ENCODE measurements at regions of chr7 and their contacts with region 1.

Region 1: DNA sequence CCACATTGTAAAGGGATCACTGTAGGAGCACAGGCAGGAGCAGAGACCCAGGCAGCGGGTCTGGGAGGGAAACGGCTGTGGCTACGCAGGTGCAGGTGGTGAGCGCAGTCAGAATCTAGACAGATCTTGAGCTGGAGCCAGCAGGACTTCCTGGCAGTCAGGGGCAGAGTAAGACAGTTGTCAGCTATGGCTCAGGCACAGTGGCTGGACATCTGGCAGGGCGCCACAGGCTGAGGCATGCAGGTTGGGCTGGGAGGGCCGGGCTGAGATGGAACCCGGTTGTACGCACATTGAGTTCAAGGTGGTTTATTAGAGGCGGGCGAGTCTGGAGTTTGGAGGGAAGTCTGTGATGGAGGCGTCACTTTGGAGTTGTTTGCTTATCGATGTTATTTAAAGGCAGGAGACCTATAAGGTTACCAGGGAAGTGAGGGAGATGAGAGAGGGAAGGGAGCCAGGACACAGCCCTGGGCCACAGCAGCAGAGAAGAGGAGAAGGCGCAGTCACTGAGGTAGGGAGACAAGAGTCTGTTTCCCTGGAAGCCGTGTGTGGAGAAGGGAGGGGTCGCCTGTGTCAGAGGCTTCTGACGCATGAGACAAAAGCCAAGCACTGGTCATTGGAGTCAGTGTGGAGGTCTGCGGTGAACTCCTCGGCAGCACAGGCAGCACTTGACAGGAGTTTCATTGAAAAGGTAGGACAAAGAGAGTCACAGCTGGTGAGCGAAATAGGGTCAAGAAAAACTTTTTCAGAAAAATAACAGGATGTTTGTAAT is 73.8 kb downstream of the LANCL2 start:
- DNase-seq: peak in 1 of 2 experiments; percentile 37
- H3K4me3 ChIP-seq: no peak overlapping the region
- H3K27ac ChIP-seq: no peak overlapping the region
- H3K4me1 ChIP-seq: no peaks in the 10 kb centered on the region
- H3K27me3 ChIP-seq: no peaks in the 10 kb centered on the region
- CTCF ChIP-seq: no peak

Region 2: DNA sequence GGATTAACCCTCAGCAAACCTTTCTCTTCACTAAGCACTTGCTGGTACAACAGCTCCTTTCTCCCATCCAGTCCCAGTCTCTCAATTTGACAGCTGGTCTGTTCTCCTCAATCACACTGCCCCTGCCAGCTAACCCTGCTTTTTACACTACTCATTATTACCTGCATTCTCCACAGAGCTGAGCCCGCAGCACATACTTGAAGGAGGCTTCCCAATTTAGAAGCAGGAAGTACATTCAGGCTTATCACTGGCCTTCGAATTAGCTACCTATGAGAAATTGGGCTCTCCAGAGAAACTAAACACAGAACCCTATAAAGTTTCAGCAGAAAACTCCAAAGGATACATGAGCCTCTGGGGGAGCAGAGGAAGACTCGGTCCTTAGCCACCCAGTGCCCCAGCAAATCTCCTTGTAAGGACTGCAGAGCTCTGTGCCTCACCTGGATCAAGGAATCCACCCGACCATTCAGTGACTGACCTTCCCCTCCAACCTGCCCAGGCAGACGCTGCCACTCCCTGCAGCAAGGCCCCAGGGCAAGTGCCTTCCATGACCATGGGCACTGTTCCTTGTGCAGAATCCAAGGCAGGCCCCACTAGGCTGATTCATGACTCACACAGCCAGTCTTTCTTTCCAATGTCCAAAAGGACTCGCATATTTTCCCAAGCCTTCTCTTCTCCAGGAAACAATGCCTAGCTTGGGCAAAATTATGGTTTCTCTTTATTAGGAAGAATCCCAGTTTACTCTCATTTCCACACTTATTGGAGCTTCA is 65.3 kb after region 1 on chr7:
- CTCF ChIA-PET with region 1: no interaction called
- POLR2A ChIA-PET with region 1: no interaction called
- intact Hi-C with region 1: loop called (anchors 5 kb)
- DNase-seq: peak; percentile 68 to 91
- H3K4me3 ChIP-seq: no peak overlapping the region
- H3K27ac ChIP-seq: peak overlapping the region; percentile 23
- H3K4me1 ChIP-seq: peaks cover 29% of the 10 kb centered on the region
- H3K27me3 ChIP-seq: no peaks in the 10 kb centered on the region
- CTCF ChIP-seq: no peak

Measured in PC-9 (cell line).